Right cardiac atrium (tissue), 5 donors: ENCODE measurements at regions of chr2 and their contacts with region 1.

Region 1: GRCh38 chr2:7037340-7038333 is 120.4 kb downstream of the RNF144A start:
- DNase-seq: peak; percentile 62 to 83 (median 78)
- ATAC-seq: peak; percentile 50 to 83
- H3K4me3 ChIP-seq: no peak overlapping the region
- H3K27ac ChIP-seq: no peak overlapping the region
- H3K4me1 ChIP-seq: no peaks in the 10 kb centered on the region
- H3K27me3 ChIP-seq: no peaks in the 10 kb centered on the region

Region 2: DNA sequence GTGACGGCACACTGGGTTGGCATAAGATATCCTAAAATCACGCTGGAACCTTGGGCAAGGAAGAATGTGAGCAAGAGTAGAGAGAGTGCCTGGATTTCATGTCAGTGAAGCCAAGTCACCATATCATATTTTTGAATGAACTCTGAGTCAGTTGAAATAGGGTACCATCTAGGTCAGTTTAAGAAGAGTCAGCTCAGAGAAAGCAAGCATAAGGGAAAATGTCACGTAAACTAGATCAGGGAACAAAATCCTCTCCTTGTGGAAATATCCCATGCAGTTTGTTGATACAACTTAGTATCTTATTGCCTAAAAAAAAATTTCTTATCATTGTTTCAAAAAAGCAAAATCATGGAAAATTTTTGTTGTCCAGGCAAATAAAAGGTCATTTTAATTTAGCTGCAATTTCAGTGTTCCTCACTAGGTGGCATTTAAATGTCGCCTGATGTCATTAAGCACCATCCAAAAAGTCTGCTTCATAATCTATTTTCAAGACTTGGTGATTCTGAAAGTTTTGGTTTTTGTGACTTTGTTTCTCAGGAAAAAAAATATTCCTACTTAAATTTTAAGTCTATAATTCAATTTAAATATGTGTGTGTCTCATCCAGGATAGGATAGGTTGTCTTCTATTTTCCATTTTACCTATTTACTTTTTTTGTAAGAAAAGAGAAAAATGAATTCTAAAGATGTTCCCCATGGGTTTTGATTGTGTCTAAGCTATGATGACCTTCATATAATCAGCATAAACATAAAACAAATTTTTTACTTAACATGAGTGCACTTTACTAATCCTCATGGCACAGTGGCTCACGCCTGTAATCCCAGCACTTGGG is 140.5 kb before region 1 on chr2:
- intact Hi-C with region 1: loop called (anchors 5 kb)
- DNase-seq: no peak
- ATAC-seq: peak in 1 of 2 donors; percentile 75
- H3K4me3 ChIP-seq: no peak overlapping the region
- H3K27ac ChIP-seq: peak overlapping the region; percentile 42
- H3K4me1 ChIP-seq: peaks cover 3% of the 10 kb centered on the region
- H3K27me3 ChIP-seq: no peaks in the 10 kb centered on the region

Region 3: DNA sequence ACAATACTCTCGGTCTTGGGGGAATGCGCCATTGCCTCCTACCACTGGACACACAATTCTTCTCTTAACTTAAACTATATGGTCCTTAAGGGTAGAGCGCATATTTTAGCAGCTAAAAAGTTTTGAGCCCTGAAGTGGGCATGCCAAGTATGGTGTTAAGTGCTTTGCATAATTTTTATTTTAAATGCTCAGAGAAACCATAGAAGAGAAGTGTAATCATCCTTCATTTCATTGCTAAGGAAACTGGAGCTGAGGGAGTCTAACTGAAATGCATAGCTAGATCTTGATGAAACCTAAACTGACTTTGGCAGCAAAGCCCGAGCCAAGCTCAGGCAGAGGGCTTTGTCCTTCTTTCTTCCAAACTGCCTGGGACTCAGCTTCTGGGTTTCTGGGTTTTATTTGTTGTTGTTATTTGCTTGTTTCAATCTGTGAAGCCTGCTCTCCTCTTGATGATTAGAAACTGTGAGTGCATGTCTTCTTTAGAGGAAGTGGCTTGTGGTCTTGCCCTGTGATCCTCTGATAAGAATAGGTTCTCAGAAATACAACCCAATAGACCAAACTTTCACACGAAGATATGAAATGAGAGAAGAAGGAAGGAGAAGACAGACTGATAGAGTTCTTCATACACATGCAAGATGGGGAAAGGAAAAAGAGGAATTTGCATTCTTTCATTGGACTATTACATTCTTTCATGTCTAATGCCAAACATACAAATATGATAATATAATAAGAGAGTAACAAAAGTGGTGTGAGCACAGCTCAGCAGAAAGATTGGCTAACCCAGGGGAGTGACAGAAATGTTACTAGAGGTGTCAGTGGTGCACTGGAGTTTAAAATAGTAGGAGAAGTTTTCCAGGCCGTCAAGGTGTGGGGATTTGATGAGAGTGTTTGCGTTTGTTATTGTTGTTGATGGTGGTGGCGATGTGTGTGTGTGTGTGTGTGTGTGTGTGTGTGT is 127.9 kb before region 1 on chr2:
- intact Hi-C with region 1: loop called in 1 of 4 experiments (anchors 5 kb)
- DNase-seq: no peak
- ATAC-seq: no peak
- H3K4me3 ChIP-seq: no peak overlapping the region
- H3K27ac ChIP-seq: no peak overlapping the region
- H3K4me1 ChIP-seq: no peaks in the 10 kb centered on the region
- H3K27me3 ChIP-seq: no peaks in the 10 kb centered on the region

Region 4: GRCh38 chr2:6917071-6917760 is 120.4 kb before region 1 on chr2 and contains the start of gene RNF144A:
- intact Hi-C with region 1: loop called in 1 of 4 experiments (anchors 5 kb)
- DNase-seq: peak; percentile 69 to 89 (median 89)
- ATAC-seq: peak; percentile 85 to 89
- H3K4me3 ChIP-seq: peak within 1 kb of the TSS; percentile 69
- H3K27ac ChIP-seq: peak within 1 kb of the TSS; percentile 25
- H3K4me1 ChIP-seq: peaks cover 4% of the 10 kb centered on the region
- H3K27me3 ChIP-seq: no peaks in the 10 kb centered on the region
- total RNA-seq, gene RNF144A: 5.9 to 14.3 (median 10.5) TPM

Region 5: DNA sequence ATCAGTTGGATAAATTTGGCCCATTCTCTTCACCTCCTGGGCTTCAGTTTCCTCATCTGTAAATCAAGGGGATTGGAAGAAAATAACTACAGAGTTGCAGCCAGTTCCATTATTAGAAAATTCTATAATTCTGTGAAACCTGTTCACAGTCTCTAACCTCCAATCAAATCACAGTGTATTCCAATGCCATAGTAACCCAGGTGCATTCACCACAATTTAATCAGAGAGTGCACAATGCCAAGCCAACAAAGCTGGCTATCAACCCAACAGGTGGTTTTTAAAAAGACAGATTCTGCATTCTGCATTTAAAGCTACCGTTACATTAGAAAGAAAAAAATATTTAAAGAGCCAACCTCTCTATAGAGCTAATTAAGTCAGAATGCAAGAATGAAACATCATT is 188.2 kb after region 1 on chr2:
- intact Hi-C with region 1: no loop called
- DNase-seq: no peak
- ATAC-seq: no peak
- H3K4me3 ChIP-seq: no peak overlapping the region
- H3K27ac ChIP-seq: no peak overlapping the region
- H3K4me1 ChIP-seq: no peaks in the 10 kb centered on the region
- H3K27me3 ChIP-seq: no peaks in the 10 kb centered on the region